Right ventricle myocardium inferior (tissue), 1 donor: ENCODE measurements at regions of chr17 and their contacts with region 1.

Region 1: DNA sequence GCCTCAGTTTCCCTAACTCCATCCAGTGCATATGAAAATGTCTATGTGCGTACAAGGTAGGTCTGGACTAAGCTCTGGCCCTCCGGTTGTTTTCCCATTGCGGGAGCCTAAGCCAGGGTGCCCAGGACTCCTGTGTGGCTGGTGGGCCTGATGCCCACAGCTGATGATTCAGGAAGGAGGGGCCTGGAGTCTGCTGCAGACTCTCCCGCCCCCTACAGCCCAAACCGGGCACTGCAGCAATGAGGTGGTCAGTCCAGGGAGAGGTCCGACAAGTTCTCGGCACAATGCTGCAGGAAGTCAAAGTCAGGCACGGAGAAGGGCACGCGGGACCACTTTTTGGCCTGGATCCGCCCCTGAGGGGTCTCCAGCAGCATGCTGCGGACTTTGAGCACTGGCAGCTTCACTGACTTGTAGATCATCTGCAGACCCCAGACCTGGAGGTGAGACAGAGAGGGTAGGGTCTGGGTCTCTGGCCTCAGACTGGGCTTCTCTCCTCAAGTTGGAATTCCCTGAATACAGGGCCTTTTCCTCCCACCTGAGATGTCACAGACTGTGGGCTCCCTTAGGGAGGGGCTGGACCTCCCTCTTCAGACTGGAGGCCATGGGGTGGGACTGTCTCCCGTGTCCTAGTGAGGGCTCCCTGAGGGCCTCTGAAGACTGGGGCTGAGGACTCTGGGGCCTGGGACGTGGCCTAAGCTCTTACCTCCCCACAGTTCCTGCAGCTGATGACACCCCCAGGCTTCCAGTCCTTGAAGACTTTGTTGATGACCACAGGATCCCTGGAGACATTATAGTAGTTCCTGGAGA is 3.4 kb upstream of the ZNF385C start:
- DNase-seq: peak; percentile 86
- ATAC-seq: peak; percentile 71

Region 2: DNA sequence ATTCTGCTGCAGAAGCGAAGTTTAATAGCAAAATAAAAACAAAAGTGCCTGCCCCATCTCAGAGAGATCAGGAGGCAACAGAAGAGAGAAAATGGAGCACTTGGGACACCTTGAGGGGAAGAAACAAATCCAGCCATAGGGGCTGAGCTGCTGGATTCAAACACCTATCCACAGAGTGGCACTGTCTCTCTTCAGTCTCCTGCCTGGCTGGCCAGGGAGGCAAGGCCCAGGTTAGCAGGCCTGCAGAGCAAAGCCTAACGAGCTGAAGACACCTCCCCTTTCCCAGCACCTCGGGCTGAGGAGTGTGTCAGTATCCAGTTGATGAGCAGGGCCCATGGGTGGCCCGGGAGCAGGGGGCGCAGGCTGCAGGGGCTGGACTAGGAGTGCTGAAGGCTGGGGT is 695.5 kb before region 1 on chr17:
- intact Hi-C with region 1: no loop called
- DNase-seq: no peak
- ATAC-seq: no peak

Region 3: DNA sequence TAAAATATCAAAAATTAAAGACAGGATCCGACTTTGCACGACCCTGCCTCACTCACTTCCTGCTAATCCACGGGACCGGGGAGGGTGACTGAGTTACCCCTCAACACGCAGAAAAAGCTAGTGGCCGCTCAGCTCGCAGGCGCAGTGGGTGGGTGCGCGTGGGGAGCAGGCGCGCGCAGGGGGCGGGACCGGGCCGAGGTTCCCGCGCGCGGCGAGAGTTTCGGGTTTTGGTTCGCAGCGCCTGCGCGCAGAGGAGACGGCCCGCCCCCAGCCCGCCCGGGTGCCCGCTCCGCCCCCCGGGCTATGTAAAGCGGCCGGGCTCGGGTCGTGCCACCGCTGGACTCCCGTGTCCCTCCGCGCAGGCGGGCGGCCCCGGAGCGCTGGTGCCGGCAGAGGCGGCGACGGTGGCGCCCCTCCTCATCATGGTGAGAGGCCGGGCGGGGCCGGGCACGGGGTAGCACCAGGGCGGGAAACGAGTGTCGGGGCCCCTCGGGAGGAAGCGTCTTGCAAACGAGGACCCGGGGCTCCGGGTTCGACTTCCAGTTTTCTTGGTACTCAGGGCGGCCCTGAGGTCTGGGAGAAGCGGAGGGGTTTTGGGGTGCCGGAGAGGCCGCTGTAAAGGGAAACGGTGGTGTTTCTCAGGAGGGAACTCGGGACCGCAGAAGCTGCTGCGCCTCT is 135.1 kb before region 1 on chr17 and contains the start of gene CNP:
- intact Hi-C with region 1: loop called (anchors 5 kb)
- DNase-seq: peak; percentile 96
- ATAC-seq: peak; percentile 96
- total RNA-seq, gene CNP: 28.2 TPM